Sciatic nerve (tissue), 2 donors: ENCODE measurements at regions of chrX and their contacts with region 1.

Region 1: GRCh38 chrX:1394708-1395501 is 3.0 kb upstream of the SLC25A6 start:
- DNase-seq: peak; percentile 58
- ATAC-seq: no peak

Region 2: DNA sequence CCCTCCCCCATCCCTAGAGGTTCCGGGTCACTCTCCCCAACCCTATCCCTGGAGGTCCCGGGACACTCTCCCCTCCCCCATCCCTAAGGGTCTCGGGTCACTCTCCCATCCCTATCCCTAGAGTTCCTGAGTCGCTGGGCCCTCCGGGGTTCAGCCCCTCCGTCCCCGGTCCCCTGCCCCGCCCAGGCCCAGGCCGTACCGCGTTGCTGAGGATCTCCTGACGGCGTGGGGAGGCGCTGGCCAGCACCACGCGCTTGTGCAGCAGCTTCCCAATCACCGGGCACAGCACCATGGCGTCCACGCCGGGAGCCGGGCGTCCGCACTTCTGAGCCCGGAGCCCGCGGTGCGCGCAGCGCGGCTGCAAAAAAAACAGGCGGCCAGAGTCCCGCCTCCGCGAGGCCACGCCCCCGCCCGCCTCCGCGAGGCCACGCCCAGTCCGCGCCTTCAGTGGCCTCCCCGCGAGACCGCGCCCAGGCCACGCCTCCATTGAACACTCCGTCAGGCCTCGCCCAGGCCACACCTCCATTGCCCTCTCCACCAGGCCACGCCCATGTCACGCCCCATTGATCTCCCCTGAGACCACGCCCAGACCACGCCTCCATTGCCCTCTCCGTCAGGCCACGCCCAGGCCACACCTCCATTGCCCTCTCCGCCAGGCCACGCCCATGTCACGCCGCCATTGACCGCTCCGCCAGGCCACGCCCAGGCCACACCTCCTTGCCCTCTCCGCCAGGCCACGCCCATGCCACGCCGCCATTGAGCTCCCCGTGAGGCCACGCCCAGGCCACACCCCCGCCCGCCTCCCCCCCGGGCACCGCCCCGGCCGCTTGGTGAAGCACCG is 57.9 kb after region 1 on chrX and contains the start of gene ASMTL:
- intact Hi-C with region 1: loop called (anchors 1 kb)
- DNase-seq: peak; percentile 100
- ATAC-seq: peak; percentile 96
- total RNA-seq, gene ASMTL: 35.0 TPM